Heart right ventricle (tissue), 16 donors: ENCODE measurements at regions of chrX and their contacts with region 1.

Region 1: DNA sequence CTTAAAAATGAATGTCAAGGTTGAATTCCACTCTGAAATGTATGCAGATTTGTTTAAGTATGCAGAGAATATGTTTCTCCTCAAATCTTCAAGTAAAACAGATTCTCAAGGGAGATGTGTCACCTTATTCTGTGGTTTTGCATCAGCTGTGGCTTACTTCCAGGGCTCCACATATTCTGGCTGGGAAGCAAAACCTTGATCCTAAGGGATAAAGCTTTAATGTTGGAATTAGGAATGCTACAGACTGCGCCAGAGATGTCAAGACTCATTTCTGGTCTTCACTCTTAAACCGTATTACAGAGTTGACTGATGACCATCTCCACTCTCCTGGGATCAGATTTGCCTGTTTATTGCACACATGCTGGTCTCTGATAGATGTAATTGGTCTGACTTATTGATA is 143.9 kb upstream of the DIPK2B start:
- DNase-seq: no peak
- ATAC-seq: no peak
- H3K4me3 ChIP-seq: no peak overlapping the region
- H3K27ac ChIP-seq: no peak overlapping the region
- H3K4me1 ChIP-seq: no peaks in the 10 kb centered on the region
- H3K27me3 ChIP-seq: peaks cover 0 to 17% (median 0%) of the 10 kb centered on the region in 7 donors
- CTCF ChIP-seq: no peak

Region 2: DNA sequence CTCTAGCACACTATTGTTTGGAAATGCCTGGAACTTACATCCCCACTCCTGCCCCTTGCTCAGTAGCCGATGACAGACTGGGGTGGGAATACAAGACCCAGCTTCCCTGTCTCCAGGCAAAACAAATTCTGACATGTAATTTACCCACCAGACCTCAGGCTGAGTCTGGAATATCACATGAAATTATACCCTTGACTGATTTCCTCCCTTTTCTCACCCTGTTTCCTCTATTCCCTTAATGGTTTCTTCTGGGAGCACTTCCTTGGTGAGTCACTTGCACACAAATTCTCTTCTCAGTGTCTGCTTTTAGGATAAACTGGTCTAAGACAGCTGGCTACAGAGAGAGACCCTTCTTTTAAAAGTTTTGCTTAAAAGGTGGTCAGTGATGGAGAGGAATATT is 78.1 kb before region 1 on chrX:
- intact Hi-C with region 1: loop called in 1 of 10 experiments (anchors 10 kb)
- DNase-seq: no peak
- ATAC-seq: no peak
- H3K4me3 ChIP-seq: no peak overlapping the region
- H3K27ac ChIP-seq: no peak overlapping the region
- H3K4me1 ChIP-seq: no peaks in the 10 kb centered on the region
- H3K27me3 ChIP-seq: peaks cover 0 to 29% (median 0%) of the 10 kb centered on the region in 7 donors
- CTCF ChIP-seq: no peak